ENCODE measurements at regions of chr11 and their contacts with region 1.

Region 1: DNA sequence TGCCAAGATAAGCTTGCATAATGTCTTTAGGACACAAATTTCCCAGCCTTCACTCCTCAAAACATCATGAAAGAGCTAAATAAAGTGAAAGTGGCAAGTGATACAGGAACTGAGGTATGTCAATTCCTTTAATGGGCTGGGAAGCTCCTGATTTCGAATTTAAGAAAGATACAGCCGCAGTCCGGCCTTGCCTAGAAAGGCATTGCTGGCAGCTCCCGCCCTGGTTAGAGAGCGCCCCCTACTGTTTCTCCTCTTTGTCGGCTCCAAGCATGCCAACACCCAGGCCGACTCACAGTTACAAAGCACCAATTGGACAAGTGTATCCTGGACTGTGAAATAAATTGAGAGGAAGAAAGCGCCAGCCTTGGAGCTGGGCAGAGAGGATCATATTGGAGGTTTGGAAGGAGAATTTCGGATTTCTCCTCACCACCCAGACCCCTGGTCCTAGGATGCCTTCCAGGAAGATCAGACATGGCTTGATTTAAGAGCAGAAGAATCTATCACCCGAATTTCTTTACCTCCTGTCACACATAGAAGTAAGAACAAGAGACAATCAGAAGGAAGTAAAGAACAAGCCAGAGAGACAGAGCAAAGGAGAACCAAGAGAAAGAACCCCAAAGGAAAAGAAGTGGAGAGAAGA is 84.0 kb downstream of the FAM76B start:
- DNase-seq: peak; percentile 73
- H3K4me3 ChIP-seq: no peak overlapping the region
- H3K27ac ChIP-seq: no peak overlapping the region
- H3K27me3 ChIP-seq: peaks cover 3% of the 10 kb centered on the region
- CTCF ChIP-seq: peak; percentile 99

Region 2: DNA sequence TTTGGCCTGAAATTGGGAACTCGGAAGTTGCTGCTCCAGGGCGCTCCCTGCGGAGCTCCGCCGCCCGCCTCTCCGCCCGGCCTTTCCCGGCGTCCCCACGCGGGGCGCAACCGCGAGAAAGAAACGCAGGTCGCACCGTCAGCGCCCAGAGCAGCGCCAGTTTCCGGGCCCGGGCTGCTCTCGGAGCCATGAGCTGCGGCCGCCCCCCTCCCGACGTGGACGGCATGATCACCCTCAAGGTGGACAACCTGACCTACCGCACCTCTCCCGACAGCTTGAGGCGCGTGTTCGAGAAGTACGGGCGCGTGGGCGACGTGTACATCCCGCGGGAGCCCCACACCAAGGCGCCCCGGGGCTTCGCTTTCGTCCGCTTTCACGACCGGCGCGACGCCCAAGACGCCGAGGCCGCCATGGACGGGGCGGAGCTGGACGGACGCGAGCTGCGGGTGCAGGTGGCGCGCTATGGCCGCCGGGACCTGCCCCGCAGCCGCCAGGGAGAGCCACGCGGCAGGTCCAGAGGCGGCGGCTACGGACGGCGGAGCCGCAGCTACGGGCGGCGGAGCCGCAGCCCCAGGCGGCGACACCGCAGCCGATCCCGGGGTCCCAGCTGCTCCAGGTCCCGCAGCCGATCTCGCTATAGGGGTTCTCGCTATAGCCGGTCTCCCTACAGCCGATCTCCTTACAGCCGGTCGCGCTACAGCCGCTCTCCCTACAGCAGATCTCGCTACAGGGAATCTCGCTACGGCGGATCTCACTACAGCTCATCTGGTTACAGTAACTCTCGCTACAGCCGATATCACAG is 638.4 kb before region 1 on chr11:
- CTCF ChIA-PET with region 1: interaction called, 48 read pairs
- POLR2A ChIA-PET with region 1: no interaction called
- DNase-seq: no peak
- H3K4me3 ChIP-seq: peak overlapping the region; percentile 77
- H3K27ac ChIP-seq: peak overlapping the region; percentile 83
- H3K27me3 ChIP-seq: no peaks in the 10 kb centered on the region
- CTCF ChIP-seq: peak; percentile 64

Region 3: DNA sequence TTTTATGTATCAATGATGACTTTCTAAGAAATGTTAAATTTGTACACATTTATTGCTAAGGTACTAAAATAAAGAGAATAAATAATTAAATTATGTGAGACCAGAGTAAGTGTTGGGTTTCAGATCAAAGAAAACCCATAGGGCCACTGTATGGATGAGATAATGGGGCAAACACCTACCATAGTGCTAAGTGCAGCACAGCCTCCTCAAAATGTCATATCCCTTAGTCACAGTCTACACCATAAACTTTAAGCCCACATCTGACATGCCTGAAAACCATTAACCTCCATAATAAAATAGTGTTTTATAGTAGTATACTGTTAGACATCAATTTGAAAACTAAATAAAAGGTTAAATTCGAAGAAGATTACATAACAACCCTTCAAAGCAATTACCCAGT is 512.1 kb before region 1 on chr11:
- CTCF ChIA-PET with region 1: interaction called, 10 read pairs
- POLR2A ChIA-PET with region 1: no interaction called
- DNase-seq: no peak
- H3K4me3 ChIP-seq: no peak overlapping the region
- H3K27ac ChIP-seq: no peak overlapping the region
- H3K27me3 ChIP-seq: no peaks in the 10 kb centered on the region
- CTCF ChIP-seq: no peak

Region 4: GRCh38 chr11:95299078-95299679 is 406.4 kb before region 1 on chr11:
- CTCF ChIA-PET with region 1: interaction called, 10 read pairs
- POLR2A ChIA-PET with region 1: no interaction called
- DNase-seq: no peak
- H3K4me3 ChIP-seq: no peak overlapping the region
- H3K27ac ChIP-seq: no peak overlapping the region
- H3K27me3 ChIP-seq: peaks cover 3% of the 10 kb centered on the region
- CTCF ChIP-seq: no peak

Region 5: DNA sequence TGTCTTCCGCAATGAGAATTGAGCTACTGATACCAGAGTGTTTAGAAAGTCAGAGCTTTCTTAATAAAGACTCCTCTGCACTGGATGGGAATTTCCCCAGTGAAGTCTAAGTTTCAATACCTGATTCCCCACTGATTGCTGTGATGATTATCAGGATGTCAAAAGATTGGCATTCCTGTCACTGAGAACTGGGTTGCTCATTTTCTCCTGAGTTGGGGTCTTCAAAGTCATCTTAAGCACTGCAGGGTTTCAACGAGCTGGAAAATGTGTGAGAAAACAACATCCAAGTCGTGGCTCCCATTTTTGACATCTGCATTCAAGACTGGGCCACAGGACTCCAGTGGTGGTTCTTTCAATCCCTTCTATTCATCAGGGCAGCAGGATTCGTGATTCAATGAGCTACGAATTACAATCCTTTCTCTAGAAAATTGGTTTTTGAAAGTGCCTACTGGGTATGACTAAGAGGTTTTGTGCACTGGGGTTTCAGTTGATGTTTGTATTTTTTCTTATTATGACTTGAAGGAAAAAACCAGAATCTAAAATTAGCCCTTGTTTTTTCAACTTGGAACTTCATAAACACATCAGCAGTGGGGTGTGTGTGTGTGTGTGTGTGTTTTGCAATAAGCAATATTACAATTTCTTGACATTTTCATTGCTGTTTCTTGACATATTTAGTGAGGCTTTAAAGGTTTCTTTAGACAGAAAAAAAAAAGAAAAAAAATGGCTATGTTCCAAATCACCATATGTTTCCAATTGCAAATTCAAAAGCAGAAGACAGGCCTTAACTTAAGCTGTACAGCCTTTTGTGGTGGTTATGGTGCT is 149.1 kb before region 1 on chr11:
- CTCF ChIA-PET with region 1: interaction called, 43 read pairs
- POLR2A ChIA-PET with region 1: no interaction called
- DNase-seq: peak; percentile 23
- H3K4me3 ChIP-seq: no peak overlapping the region
- H3K27ac ChIP-seq: peak overlapping the region; percentile 58
- H3K27me3 ChIP-seq: no peaks in the 10 kb centered on the region
- CTCF ChIP-seq: no peak

Region 6: GRCh38 chr11:95715777-95716241 is 10.2 kb after region 1 on chr11:
- CTCF ChIA-PET with region 1: interaction called, 19 read pairs
- POLR2A ChIA-PET with region 1: no interaction called
- DNase-seq: no peak
- H3K4me3 ChIP-seq: no peak overlapping the region
- H3K27ac ChIP-seq: no peak overlapping the region
- H3K27me3 ChIP-seq: peaks cover 11% of the 10 kb centered on the region
- CTCF ChIP-seq: no peak

Region 7: DNA sequence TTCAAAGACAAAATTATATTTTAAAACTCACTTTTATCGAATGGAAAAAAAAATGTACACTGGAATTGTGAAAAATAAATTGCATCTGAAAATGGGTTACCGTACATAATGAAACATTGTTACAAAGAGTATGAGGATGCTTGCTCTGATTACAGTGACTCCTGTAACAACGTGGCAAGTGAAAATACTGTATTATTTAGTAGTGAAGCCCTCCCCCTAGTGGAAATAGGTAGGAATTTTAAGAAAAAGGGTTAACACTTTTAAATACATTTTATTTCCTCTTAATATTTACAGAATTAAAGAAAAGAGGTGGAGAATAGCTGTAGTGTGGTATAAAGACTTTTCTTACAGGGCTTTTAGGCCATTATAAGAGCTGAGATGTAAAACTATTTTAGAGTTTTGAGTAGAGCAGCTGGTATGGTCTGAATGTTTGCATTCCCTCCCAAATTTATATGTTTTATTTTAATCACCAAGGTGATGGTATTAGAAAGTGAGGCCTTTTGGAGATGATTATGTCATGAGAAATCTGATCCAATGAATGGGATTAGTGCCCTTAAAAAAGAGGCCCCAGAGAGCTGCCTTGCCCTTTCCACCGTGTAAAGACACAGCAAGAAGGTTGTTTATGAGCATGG is 58.8 kb after region 1 on chr11:
- CTCF ChIA-PET with region 1: interaction called, 10 read pairs
- POLR2A ChIA-PET with region 1: no interaction called
- DNase-seq: peak; percentile 38
- H3K4me3 ChIP-seq: no peak overlapping the region
- H3K27ac ChIP-seq: no peak overlapping the region
- H3K27me3 ChIP-seq: no peaks in the 10 kb centered on the region
- CTCF ChIP-seq: peak; percentile 63

Region 8: GRCh38 chr11:95802806-95803205 is 97.2 kb after region 1 on chr11:
- CTCF ChIA-PET with region 1: no interaction called
- POLR2A ChIA-PET with region 1: no interaction called
- DNase-seq: no peak
- H3K4me3 ChIP-seq: no peak overlapping the region
- H3K27ac ChIP-seq: no peak overlapping the region
- H3K27me3 ChIP-seq: no peaks in the 10 kb centered on the region
- CTCF ChIP-seq: no peak

Measured in AG04450 (cell line).